Esophagus muscularis mucosa (tissue), 4 donors: ENCODE measurements at regions of chr2 and their contacts with region 1.

Region 1: DNA sequence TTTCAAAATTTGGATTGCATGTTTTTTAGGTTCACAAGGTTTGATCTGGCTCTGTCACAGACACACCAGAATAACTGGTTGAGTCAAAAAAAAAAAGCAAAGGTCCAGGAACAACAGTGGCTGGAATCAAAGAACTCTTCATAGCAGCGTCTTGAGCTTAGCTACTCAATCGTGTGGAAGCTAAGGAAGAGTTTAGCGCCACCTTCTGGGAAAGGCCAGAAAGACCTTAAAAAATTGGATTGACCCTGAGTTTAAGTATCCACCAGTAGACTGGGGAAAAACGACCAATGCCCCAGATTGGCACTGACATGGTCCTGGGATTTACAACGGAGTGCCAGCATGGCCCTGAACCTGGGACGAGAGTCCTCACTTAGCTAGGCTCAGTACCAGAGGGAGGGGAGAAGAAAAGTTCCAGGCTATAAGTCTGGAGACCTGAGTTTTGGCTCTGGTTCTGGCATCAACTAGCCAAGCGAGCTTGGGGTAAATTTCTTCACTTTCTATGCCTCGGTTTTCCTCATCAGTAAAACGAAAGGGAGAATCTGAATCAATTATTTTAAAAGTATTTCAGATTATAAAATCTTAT is 71.1 kb upstream of the TFCP2L1 start:
- DNase-seq: no peak
- H3K4me3 ChIP-seq: no peak overlapping the region
- H3K27ac ChIP-seq: no peak overlapping the region
- H3K4me1 ChIP-seq: peaks cover 2 to 9% (median 7%) of the 10 kb centered on the region in 4 donors
- H3K27me3 ChIP-seq: no peaks in the 10 kb centered on the region
- CTCF ChIP-seq: peak; percentile 38 to 55 (median 41)
- EP300 ChIP-seq: no peak
- POLR2A ChIP-seq: no peak

Region 2: GRCh38 chr2:121095257-121096080 is 260.7 kb before region 1 on chr2:
- intact Hi-C with region 1: loop called (anchors 10 kb)
- DNase-seq: no peak
- H3K4me3 ChIP-seq: no peak overlapping the region
- H3K27ac ChIP-seq: no peak overlapping the region
- H3K4me1 ChIP-seq: peaks cover 5 to 12% (median 7%) of the 10 kb centered on the region in 4 donors
- H3K27me3 ChIP-seq: peaks cover 0 to 25% (median 0%) of the 10 kb centered on the region in 4 donors
- CTCF ChIP-seq: peak; percentile 45 to 63 (median 46)
- EP300 ChIP-seq: no peak
- POLR2A ChIP-seq: no peak